CD8-positive, alpha-beta memory T cell (primary cell): ENCODE measurements at regions of chrX and their contacts with region 1.

Region 1: DNA sequence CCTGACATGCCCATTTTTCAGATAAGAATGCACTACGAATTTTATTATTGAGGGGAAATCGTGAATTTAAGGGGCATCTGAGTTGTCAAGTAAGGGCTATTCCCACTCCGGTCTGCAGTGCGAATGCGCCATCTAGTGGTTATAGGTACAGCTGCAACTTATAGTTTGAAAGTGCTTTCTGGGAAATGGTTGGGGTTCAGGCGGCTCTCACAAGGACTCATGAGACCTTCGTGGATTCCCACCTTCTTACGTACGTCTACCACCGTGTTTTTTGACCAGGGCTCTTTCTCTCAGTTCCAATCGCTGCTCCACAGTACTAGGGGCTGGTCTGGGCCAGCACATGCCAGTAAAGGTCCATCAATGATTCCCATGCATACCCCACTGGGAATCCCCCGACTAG is 12.3 kb downstream of the MSL3 start:
- DNase-seq: peak in 4 of 5 donors; percentile 24 to 77 (median 65)
- H3K4me3 ChIP-seq: no peak overlapping the region
- H3K4me3 Mint-ChIP-seq: no peak overlapping the region
- H3K27ac ChIP-seq: no peak overlapping the region
- H3K27ac Mint-ChIP-seq: peak overlapping the region in 7 of 8 donors; percentile 20 to 86 (median 59)
- H3K4me1 ChIP-seq: peaks cover 26% of the 10 kb centered on the region
- H3K4me1 Mint-ChIP-seq: peaks cover 27 to 48% (median 42%) of the 10 kb centered on the region in 3 donors
- H3K27me3 ChIP-seq: no peaks in the 10 kb centered on the region
- H3K27me3 Mint-ChIP-seq: no peaks in the 10 kb centered on the region

Region 2: GRCh38 chrX:11363069-11363594 is 407.2 kb before region 1 on chrX:
- CTCF ChIA-PET with region 1: no interaction called
- POLR2A ChIA-PET with region 1: no interaction called
- DNase-seq: no peak
- H3K4me3 ChIP-seq: no peak overlapping the region
- H3K4me3 Mint-ChIP-seq: no peak overlapping the region
- H3K27ac ChIP-seq: no peak overlapping the region
- H3K27ac Mint-ChIP-seq: peak overlapping the region in 1 of 8 donors; percentile 8
- H3K4me1 ChIP-seq: no peaks in the 10 kb centered on the region
- H3K4me1 Mint-ChIP-seq: no peaks in the 10 kb centered on the region
- H3K27me3 ChIP-seq: no peaks in the 10 kb centered on the region
- H3K27me3 Mint-ChIP-seq: no peaks in the 10 kb centered on the region

Region 3: GRCh38 chrX:11758400-11759171 is 11.7 kb before region 1 on chrX:
- CTCF ChIA-PET with region 1: interaction called, 19 read pairs
- POLR2A ChIA-PET with region 1: interaction called, 3 read pairs
- DNase-seq: peak; percentile 79 to 94 (median 87)
- H3K4me3 ChIP-seq: peak overlapping the region; percentile 88
- H3K4me3 Mint-ChIP-seq: peak overlapping the region; percentile 87 to 97 (median 93)
- H3K27ac ChIP-seq: peak overlapping the region; percentile 87
- H3K27ac Mint-ChIP-seq: peak overlapping the region; percentile 82 to 99 (median 95)
- H3K4me1 ChIP-seq: peaks cover 15% of the 10 kb centered on the region
- H3K4me1 Mint-ChIP-seq: peaks cover 30 to 52% (median 36%) of the 10 kb centered on the region in 3 donors
- H3K27me3 ChIP-seq: no peaks in the 10 kb centered on the region
- H3K27me3 Mint-ChIP-seq: peaks cover 0 to 4% of the 10 kb centered on the region in 2 donors

Region 4: GRCh38 chrX:11787564-11787963 is 17.2 kb after region 1 on chrX:
- CTCF ChIA-PET with region 1: interaction called, 12 read pairs
- POLR2A ChIA-PET with region 1: no interaction called
- DNase-seq: peak; percentile 51 to 76 (median 56)
- H3K4me3 ChIP-seq: peak overlapping the region; percentile 14
- H3K4me3 Mint-ChIP-seq: peak overlapping the region; percentile 56 to 79 (median 68)
- H3K27ac ChIP-seq: no peak overlapping the region
- H3K27ac Mint-ChIP-seq: peak overlapping the region in 2 of 8 donors; percentile 70 to 77
- H3K4me1 ChIP-seq: peaks cover 17% of the 10 kb centered on the region
- H3K4me1 Mint-ChIP-seq: peaks cover 22 to 30% (median 22%) of the 10 kb centered on the region in 3 donors
- H3K27me3 ChIP-seq: no peaks in the 10 kb centered on the region
- H3K27me3 Mint-ChIP-seq: peaks cover 0 to 2% of the 10 kb centered on the region in 2 donors

Region 5: DNA sequence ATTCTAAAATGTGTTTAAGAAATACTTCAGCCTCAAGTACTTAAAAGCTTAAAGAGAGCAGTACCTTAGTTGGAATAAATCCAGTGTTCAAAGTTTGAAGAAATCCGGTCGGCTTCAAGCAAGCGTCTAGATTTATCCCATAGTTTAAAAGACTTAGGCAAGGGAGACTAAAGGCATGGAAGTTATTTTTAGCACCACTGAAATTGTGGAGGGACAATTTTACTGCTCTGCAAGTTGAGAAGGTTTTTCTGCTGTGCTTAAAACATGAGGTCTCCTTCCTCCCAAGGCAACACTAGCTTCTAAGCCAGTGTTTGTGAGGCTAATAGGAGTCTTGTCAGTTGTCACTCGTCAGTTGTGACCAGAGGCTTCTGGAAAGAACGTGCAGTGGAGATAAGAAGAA is 171.3 kb after region 1 on chrX:
- CTCF ChIA-PET with region 1: no interaction called
- POLR2A ChIA-PET with region 1: no interaction called
- DNase-seq: no peak
- H3K4me3 ChIP-seq: no peak overlapping the region
- H3K4me3 Mint-ChIP-seq: no peak overlapping the region
- H3K27ac ChIP-seq: no peak overlapping the region
- H3K27ac Mint-ChIP-seq: no peak overlapping the region
- H3K4me1 ChIP-seq: no peaks in the 10 kb centered on the region
- H3K4me1 Mint-ChIP-seq: no peaks in the 10 kb centered on the region
- H3K27me3 ChIP-seq: no peaks in the 10 kb centered on the region
- H3K27me3 Mint-ChIP-seq: peaks cover 0 to 5% of the 10 kb centered on the region in 2 donors